ENCODE measurements at regions of chr3 and their contacts with region 1.

Region 1: DNA sequence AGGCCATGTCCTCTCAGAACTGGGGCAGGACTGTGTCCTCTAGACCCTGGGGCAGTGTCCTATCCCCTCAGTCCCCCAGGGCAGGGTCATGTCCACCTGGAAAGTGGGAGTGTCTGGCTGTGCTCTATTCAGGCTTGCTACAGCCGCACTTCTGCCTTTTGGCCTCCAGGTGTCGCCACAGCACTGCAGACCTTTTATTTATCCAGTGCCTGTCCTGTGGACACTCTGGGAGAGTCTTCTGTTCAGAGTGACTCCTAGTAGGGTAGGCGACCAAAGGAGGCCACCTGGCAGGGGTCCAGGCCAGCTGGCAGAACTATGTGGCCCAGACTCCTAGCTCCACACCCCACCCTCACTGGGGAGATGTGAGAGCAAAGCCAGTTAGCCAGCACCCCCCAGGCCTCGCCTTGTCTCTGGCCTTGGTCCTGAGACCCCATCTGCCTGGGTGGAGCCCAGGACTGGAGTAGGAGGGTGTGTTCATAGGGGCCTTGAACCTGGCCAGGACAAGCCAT is 3.9 kb downstream of the TMIE start:
- DNase-seq: peak; percentile 56 to 74
- ATAC-seq: peak; percentile 90

Region 2: GRCh38 chr3:46321461-46322104 is 383.5 kb before region 1 on chr3:
- intact Hi-C with region 1: no loop called
- DNase-seq: no peak
- ATAC-seq: no peak

Region 3: GRCh38 chr3:46607603-46608028 is 97.5 kb before region 1 on chr3:
- intact Hi-C with region 1: no loop called
- DNase-seq: no peak
- ATAC-seq: no peak

Region 4: DNA sequence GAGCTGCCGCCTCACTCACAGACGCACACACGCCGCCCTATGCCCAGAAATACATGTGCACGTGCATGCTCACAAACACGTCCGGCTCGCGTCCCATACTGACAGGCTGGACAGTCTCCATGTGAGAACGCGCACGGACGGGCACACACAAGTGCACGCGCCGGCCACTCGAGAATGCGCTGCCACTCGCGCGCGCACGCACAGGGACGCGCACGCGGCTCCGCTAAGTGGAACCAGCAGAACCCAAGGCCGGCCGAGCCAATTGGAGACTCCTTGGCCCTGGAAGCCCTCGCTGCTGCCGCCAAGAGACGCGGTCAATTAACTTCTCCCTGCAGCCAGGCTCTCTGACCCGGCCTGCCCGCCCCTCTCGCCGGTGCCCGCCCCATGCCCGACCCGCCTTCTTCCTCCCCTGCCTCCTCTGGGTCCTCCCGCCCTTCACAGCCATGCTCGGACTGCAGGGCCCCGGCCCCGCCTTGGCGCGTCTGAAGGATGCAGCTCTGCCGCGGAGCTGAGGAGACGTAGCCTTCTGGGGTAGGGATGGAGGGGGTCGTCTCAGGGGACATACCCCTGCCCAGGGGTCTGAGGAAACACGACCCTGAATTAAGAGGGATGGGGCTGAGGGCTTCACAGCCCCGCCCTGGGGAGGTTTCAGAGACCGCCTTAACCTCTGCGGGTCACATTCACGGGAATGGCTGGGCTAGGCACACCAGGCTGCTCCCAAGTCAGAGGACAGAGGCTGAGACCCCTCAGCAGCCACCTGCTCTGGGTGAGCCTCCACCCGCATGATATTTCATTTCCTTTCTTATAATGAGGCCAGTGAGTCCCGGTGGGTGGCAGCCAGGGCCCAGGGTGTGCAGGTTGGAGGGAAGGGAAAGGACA is 187.4 kb after region 1 on chr3:
- intact Hi-C with region 1: loop called in 1 of 2 experiments (anchors 5 kb)
- DNase-seq: peak; percentile 61 to 67
- ATAC-seq: peak; percentile 76

Region 5: DNA sequence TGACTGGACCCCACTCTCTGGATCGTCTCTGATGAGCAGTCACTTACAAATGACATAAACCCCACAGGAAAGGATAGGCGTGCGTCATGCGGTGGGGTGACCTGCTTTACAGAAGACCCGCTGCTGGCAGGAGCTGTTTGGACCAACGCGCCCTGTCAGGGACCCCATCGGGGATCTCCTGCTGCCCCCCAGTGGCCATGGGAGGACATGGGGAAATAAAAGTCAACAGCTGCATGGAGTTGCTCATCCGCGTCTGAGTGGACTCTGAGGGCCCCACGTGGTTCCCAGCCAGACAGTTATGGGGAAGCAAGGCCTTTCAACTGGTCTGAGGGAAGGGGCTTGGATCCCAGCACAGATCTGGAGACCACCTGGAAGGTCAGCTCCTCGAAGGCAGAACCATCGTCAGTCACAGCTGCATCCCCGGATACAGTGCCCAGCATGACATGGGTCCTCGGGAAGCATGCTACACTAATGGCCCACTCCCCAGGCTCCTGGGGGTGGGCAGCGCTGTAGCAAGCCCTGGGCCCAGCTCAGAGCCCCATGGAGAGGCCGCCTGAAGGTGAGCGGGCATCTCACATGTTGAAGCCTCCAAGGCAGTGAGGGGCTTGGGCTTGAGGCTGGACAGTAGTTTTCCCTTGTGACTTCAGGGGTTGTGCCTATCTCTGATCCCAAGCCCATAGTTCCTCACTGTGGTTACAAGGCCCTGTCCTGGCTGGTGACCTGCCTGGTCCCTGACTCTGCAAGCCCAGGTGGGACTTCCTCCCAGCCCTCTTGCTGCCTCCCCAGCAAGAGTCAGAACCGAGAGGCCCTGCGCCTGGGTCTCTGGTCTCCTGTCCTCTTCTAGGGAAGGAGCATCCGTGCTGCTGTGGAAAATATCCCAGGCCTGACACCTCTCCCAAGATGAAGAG is 204.7 kb after region 1 on chr3:
- intact Hi-C with region 1: loop called (anchors 5 to 10 kb)
- DNase-seq: peak; percentile 78 to 87
- ATAC-seq: peak; percentile 65

Measured in left colon (tissue), 2 donors.